Activated CD8-positive, alpha-beta T cell treated with anti-CD3 and anti-CD28 coated beads for 36 hours (primary cell): ENCODE measurements at regions of chr14 and their contacts with region 1.

Region 1: GRCh38 chr14:24806061-24806678 is 172.2 kb upstream of the GZMB start:
- DNase-seq: peak; percentile 74
- ATAC-seq: peak; percentile 62
- H3K4me3 Mint-ChIP-seq: no peak overlapping the region
- H3K27ac Mint-ChIP-seq: no peak overlapping the region
- H3K4me1 Mint-ChIP-seq: no peaks in the 10 kb centered on the region
- H3K27me3 Mint-ChIP-seq: peaks cover 6% of the 10 kb centered on the region
- CTCF ChIP-seq: peak; percentile 83

Region 2: GRCh38 chr14:24789378-24789884 is 16.7 kb before region 1 on chr14:
- CTCF ChIA-PET with region 1: interaction called, 16 read pairs
- POLR2A ChIA-PET with region 1: interaction called, 3 read pairs
- intact Hi-C with region 1: no loop called
- DNase-seq: no peak
- ATAC-seq: no peak
- H3K4me3 Mint-ChIP-seq: no peak overlapping the region
- H3K27ac Mint-ChIP-seq: no peak overlapping the region
- H3K4me1 Mint-ChIP-seq: no peaks in the 10 kb centered on the region
- H3K27me3 Mint-ChIP-seq: peaks cover 13% of the 10 kb centered on the region
- CTCF ChIP-seq: no peak

Region 3: GRCh38 chr14:24826390-24826789 is 20.2 kb after region 1 on chr14:
- CTCF ChIA-PET with region 1: no interaction called
- POLR2A ChIA-PET with region 1: no interaction called
- intact Hi-C with region 1: no loop called
- DNase-seq: no peak
- ATAC-seq: no peak
- H3K4me3 Mint-ChIP-seq: no peak overlapping the region
- H3K27ac Mint-ChIP-seq: no peak overlapping the region
- H3K4me1 Mint-ChIP-seq: no peaks in the 10 kb centered on the region
- H3K27me3 Mint-ChIP-seq: peaks cover 10% of the 10 kb centered on the region
- CTCF ChIP-seq: no peak

Region 4: DNA sequence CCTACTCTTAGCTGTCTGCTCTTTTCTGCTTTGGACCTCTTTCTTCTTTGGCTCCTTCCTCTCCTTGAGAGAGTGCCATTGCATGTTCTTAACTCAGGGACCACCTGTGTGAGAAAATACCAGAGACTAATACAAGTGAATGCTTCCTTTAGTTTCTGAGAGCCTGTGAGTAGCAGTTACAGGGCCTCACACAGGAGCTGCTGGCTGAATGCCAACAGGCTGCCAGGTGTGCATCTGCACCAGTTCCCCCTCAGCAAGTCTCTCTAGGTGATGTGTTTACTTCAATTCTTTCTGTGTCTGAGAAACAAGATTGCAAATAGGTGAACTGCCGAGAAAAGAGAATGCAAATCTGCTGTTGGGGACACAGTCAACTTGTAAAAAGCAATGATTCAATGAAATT is 135.5 kb after region 1 on chr14:
- CTCF ChIA-PET with region 1: no interaction called
- POLR2A ChIA-PET with region 1: no interaction called
- intact Hi-C with region 1: no loop called
- DNase-seq: no peak
- ATAC-seq: no peak
- H3K4me3 Mint-ChIP-seq: no peak overlapping the region
- H3K27ac Mint-ChIP-seq: no peak overlapping the region
- H3K4me1 Mint-ChIP-seq: no peaks in the 10 kb centered on the region
- H3K27me3 Mint-ChIP-seq: no peaks in the 10 kb centered on the region
- CTCF ChIP-seq: no peak

Region 5: DNA sequence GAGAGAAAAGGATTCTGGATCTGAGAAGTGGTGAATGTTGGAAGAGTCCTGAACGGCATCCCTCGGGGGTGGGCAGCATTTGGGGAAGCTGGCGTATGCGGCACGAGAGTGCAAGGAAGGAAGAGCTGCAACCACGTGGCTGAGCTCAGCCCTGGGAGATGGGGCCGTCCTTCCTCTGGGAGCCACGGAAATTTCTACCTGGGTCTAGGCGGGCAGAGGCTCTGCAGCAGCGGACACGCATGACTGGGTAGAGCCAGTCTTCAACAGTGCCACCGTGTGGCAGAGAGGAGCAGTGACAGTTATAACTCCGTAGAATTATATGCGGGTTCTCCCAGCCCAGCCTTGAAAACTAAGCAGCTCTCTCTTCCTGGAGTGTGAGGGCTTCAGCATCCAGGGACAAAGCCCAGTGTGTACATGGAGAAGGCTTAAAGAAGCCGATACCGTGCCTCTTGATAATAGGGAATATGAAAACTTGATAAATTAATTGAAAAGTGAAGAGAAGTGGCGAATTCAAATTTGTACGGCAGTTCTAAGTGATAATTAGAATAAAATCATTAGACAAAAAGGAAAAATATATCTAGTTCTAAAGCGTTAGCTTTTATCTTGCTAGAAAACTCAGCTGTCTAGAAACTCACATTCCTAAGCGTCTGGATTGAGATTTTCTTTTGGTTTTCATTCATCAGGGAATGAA is 326.7 kb after region 1 on chr14:
- CTCF ChIA-PET with region 1: interaction called, 13 read pairs
- POLR2A ChIA-PET with region 1: no interaction called
- intact Hi-C with region 1: no loop called
- DNase-seq: peak; percentile 62
- ATAC-seq: peak; percentile 96
- H3K4me3 Mint-ChIP-seq: no peak overlapping the region
- H3K27ac Mint-ChIP-seq: no peak overlapping the region
- H3K4me1 Mint-ChIP-seq: peaks cover 4% of the 10 kb centered on the region
- H3K27me3 Mint-ChIP-seq: peaks cover 33% of the 10 kb centered on the region
- CTCF ChIP-seq: peak; percentile 77

Region 6: GRCh38 chr14:25150934-25151790 is 345.0 kb after region 1 on chr14:
- CTCF ChIA-PET with region 1: interaction called, 3 read pairs
- POLR2A ChIA-PET with region 1: no interaction called
- intact Hi-C with region 1: loop called (anchors 10 kb)
- DNase-seq: no peak
- ATAC-seq: no peak
- H3K4me3 Mint-ChIP-seq: no peak overlapping the region
- H3K27ac Mint-ChIP-seq: no peak overlapping the region
- H3K4me1 Mint-ChIP-seq: no peaks in the 10 kb centered on the region
- H3K27me3 Mint-ChIP-seq: peaks cover 5% of the 10 kb centered on the region
- CTCF ChIP-seq: peak; percentile 80